ENCODE measurements at regions of chr11 and their contacts with region 1.

Region 1: DNA sequence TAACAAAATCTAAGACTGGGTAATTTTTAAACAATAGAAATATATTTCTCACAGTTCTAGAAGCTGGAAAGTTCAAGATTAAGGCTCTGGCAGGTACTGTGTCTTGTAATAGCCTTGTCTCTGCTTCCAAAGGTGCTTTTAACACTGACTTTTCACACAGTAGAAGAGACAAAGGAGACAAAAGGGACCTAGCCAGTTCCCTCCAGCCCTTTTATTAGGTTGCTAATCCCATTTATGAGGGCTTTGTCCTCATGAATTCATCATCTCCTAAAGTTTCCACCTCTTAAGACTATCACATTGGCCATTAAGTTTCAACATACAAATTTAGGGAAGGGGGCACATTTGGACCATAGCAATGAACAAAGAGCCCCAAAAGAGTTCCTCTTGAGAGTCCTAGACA is 40.7 kb downstream of the FAM181B start:
- DNase-seq: no peak
- H3K4me3 Mint-ChIP-seq: no peak overlapping the region
- H3K27ac Mint-ChIP-seq: no peak overlapping the region
- H3K4me1 Mint-ChIP-seq: no peaks in the 10 kb centered on the region
- H3K27me3 Mint-ChIP-seq: peaks cover 16% of the 10 kb centered on the region

Region 2: GRCh38 chr11:81394311-81394710 is 1298.7 kb before region 1 on chr11:
- intact Hi-C with region 1: no loop called
- DNase-seq: no peak
- H3K4me3 Mint-ChIP-seq: no peak overlapping the region
- H3K27ac Mint-ChIP-seq: no peak overlapping the region
- H3K4me1 Mint-ChIP-seq: no peaks in the 10 kb centered on the region
- H3K27me3 Mint-ChIP-seq: no peaks in the 10 kb centered on the region

Region 3: DNA sequence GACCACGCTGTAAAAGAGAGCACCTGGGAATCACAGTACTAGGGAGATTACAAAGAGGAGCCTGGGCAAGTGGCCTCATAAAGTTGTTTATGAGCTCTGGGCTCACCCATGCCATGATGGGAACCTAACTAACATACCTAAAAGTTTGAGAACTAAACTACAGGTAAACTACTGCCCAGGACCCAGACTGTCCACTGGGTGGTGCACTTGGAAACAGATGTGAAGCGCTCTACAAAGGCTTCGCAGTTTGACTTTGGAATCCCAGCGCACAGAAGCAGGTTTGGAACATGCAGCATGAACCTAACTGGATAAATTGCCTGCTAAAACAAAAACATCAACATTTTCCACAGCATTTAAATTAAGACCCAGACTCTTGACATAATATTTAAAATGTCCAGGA is 377.9 kb before region 1 on chr11:
- intact Hi-C with region 1: loop called (anchors 5 kb)
- DNase-seq: no peak
- H3K4me3 Mint-ChIP-seq: no peak overlapping the region
- H3K27ac Mint-ChIP-seq: no peak overlapping the region
- H3K4me1 Mint-ChIP-seq: no peaks in the 10 kb centered on the region
- H3K27me3 Mint-ChIP-seq: no peaks in the 10 kb centered on the region